ENCODE measurements at regions of chr4 and their contacts with region 1.

Region 1: DNA sequence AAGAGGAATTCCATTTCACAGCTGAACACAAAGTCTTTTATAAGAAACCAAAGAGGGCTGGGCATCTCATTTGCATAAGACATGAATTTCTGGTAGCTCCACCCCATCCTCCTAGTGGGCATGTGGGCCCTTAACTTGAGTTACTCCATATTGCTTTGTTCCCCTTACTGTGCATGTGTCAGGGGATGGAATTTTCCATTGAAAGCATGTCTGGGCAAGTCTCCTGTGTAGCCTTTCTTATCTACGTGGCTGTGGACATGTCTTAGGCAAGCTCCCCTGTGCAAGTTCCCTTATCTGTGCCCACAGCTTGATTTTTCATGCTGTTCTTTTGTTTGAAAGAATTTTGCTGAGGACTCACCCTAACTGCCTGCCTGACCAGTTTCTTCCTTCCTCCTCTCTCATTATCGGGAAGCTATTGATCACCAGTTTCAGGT is 123.5 kb upstream of the JADE1 start:
- DNase-seq: no peak
- H3K4me3 ChIP-seq: no peak overlapping the region
- H3K27ac ChIP-seq: no peak overlapping the region
- H3K4me1 ChIP-seq: no peaks in the 10 kb centered on the region
- H3K27me3 ChIP-seq: no peaks in the 10 kb centered on the region
- CTCF ChIP-seq: no peak
- POLR2A ChIP-seq: no peak

Region 2: DNA sequence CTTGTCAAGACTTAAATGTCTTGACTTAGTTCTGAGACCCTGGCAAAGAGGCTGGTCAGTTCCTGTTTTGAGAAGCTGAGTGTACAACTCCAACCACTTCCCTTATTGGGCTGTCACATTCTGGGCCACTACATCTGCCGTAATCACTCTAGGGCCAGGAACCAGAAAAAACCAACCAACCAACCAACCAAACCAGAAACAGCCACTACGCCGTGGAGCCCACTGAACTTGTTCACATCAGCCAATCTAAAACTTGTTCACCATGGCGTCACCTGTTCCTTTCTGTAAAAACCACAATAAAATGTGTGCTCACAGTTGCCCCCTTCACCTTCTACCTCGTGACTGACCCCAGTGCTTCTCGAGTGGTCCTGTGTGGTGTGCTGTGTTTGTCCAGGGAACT is 230.8 kb after region 1 on chr4:
- intact Hi-C with region 1: loop called (anchors 5 kb)
- DNase-seq: no peak
- H3K4me3 ChIP-seq: no peak overlapping the region
- H3K27ac ChIP-seq: no peak overlapping the region
- H3K4me1 ChIP-seq: no peaks in the 10 kb centered on the region
- H3K27me3 ChIP-seq: no peaks in the 10 kb centered on the region
- CTCF ChIP-seq: no peak
- POLR2A ChIP-seq: no peak